A549 (cell line): ENCODE measurements at regions of chr12 and their contacts with region 1.

Region 1: GRCh38 chr12:14167005-14167628 is 185.7 kb upstream of the GRIN2B start:
- DNase-seq: peak; percentile 60 to 61
- ATAC-seq: peak; percentile 68 to 84; a peak in 4 of 6 replicates
- H3K4me3 ChIP-seq: no peak overlapping the region
- H3K27ac ChIP-seq: no peak overlapping the region
- H3K4me1 ChIP-seq: no peaks in the 10 kb centered on the region
- CTCF ChIP-seq: peak; percentile 97
- EP300 ChIP-seq: no peak
- POLR2A ChIP-seq: no peak
- RAD21 ChIP-seq: peak; percentile 96 to 99

Region 2: DNA sequence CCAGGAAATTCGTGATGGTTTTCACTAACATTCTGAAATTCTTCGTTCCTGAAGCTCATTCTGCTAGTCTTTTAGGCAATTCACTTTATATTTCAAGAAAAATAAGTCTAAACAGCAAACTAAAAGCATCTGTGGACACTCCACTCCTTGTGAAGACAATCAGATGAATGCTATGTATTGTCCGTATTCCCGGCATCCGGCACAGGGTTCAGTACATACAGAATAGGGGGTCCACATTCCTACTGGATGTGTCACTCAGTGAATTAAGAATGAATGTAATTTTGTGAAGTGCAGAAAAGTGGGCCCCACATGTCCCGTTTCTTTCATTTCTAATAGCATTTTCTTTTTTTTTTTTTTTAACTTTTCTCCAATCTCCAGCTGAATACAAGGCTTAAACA is 427.0 kb before region 1 on chr12:
- CTCF ChIA-PET with region 1: interaction called, 14 read pairs
- POLR2A ChIA-PET with region 1: no interaction called
- DNase-seq: no peak
- ATAC-seq: peak in 1 of 2 experiments; percentile 8; a peak in 2 of 6 replicates
- H3K4me3 ChIP-seq: no peak overlapping the region
- H3K27ac ChIP-seq: peak overlapping the region in 1 of 2 experiments; percentile 42; a peak in 2 of 6 replicates
- H3K4me1 ChIP-seq: peaks cover 18% of the 10 kb centered on the region; the same call in 2 of the 3 replicates
- CTCF ChIP-seq: no peak
- EP300 ChIP-seq: no peak
- POLR2A ChIP-seq: no peak
- RAD21 ChIP-seq: no peak